ENCODE measurements at regions of chr16 and their contacts with region 1.

Region 1: DNA sequence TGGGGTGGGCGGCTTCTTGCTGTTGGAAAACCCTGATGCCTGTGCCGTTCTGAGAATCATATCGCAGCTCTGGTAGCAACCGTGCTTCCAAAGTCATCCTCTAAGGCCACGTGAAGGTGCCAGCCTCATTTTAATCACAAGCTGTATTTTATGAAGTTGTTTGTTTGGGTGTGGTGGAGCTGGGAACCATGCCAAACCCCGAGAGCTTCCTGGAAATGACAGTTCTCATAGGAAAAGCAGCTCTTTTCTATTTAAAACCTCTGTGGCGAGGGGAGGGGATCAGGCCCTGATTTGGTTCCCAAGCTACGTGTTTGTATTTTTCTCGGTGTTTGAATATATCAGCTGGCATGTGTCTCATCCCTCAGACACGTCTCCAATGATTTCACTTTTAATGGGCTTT is 21.7 kb downstream of the KNOP1 start:
- DNase-seq: peak; percentile 94
- H3K4me3 ChIP-seq: no peak overlapping the region
- H3K27ac ChIP-seq: peak overlapping the region; percentile 59
- H3K4me1 ChIP-seq: peaks cover 17% of the 10 kb centered on the region
- H3K27me3 ChIP-seq: no peaks in the 10 kb centered on the region
- CTCF ChIP-seq: no peak
- POLR2A ChIP-seq: no peak

Region 2: GRCh38 chr16:19532601-19533000 is 163.7 kb before region 1 on chr16:
- CTCF ChIA-PET with region 1: no interaction called
- POLR2A ChIA-PET with region 1: no interaction called
- dilution Hi-C with region 1: no loop called
- intact Hi-C with region 1: no loop called
- DNase-seq: no peak
- H3K4me3 ChIP-seq: no peak overlapping the region
- H3K27ac ChIP-seq: no peak overlapping the region
- H3K4me1 ChIP-seq: no peaks in the 10 kb centered on the region
- H3K27me3 ChIP-seq: no peaks in the 10 kb centered on the region
- CTCF ChIP-seq: no peak
- POLR2A ChIP-seq: no peak

Region 3: GRCh38 chr16:19680881-19681340 is 15.4 kb before region 1 on chr16:
- CTCF ChIA-PET with region 1: interaction called, 11 read pairs
- POLR2A ChIA-PET with region 1: no interaction called
- dilution Hi-C with region 1: no loop called
- intact Hi-C with region 1: no loop called
- DNase-seq: no peak
- H3K4me3 ChIP-seq: no peak overlapping the region
- H3K27ac ChIP-seq: no peak overlapping the region
- H3K4me1 ChIP-seq: no peaks in the 10 kb centered on the region
- H3K27me3 ChIP-seq: no peaks in the 10 kb centered on the region
- CTCF ChIP-seq: peak in 1 of 2 donors; percentile 7
- POLR2A ChIP-seq: no peak

Region 4: DNA sequence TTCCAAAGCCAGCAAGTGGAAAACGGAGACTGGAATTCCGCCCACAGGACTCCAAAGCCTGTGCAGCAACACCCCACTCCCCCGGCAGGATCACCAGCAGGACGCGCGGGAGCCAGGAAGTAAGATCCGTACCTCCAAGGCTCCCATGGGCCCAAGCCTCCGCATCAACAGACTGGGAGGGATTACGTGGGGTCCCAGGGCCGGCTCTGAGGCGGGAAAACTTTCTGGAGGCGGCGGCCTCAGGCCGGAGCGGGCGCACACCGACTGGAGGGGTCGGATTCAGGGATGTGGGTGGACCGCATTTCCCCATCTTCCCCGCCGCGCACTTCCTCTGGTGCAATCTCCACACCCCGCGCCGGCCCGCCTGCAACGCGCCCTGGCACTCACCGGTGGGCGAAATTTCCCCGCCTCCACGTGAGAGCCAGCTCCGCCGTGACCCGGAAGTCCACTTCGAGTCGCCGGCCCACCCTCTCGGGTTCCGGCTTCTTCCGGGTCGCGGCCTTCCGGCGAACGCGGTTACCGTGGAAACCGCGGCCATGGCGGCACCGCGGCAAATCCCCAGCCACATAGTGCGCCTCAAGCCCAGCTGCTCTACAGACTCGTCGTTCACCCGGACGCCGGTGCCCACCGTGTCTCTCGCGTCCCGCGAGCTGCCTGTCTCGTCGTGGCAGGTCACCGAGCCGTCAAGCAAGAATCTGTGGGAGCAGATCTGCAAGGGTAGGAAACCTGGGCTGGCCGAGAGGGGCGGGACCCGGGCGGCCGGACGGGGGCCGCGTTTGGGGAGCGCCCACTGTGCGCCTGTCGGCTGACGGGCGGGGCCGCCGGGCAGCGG is 21.7 kb after region 1 on chr16 and contains the starts of genes IQCK and KNOP1:
- CTCF ChIA-PET with region 1: interaction called, 6 read pairs
- POLR2A ChIA-PET with region 1: no interaction called
- dilution Hi-C with region 1: no loop called
- intact Hi-C with region 1: loop called (anchors 1 kb)
- DNase-seq: peak; percentile 89
- H3K4me3 ChIP-seq: peak within 1 kb of the TSS; percentile 68 to 100 (median 99)
- H3K27ac ChIP-seq: peak within 1 kb of the TSS; percentile 81
- H3K4me1 ChIP-seq: peaks cover 13% of the 10 kb centered on the region
- H3K27me3 ChIP-seq: no peaks in the 10 kb centered on the region
- CTCF ChIP-seq: peak in 1 of 2 donors; percentile 15
- POLR2A ChIP-seq: peak; percentile 32
- total RNA-seq, gene IQCK: 13.2 and 17.2 TPM in 2 replicates
- total RNA-seq, gene KNOP1: 33.5 and 43.2 TPM in 2 replicates